Ascending aorta (tissue), 2 donors: ENCODE measurements at regions of chr9 and their contacts with region 1.

Region 1: GRCh38 chr9:70258692-70259511 is at the start of gene SMC5:
- DNase-seq: peak; percentile 47 to 96
- H3K4me3 ChIP-seq: peak within 1 kb of the TSS; percentile 75 to 98
- H3K27ac ChIP-seq: peak within 1 kb of the TSS; percentile 84 to 96
- H3K4me1 ChIP-seq: peaks cover 6 to 43% of the 10 kb centered on the region in 2 donors
- H3K27me3 ChIP-seq: no peaks in the 10 kb centered on the region
- CTCF ChIP-seq: no peak
- total RNA-seq, gene SMC5: 13.9 TPM

Region 2: DNA sequence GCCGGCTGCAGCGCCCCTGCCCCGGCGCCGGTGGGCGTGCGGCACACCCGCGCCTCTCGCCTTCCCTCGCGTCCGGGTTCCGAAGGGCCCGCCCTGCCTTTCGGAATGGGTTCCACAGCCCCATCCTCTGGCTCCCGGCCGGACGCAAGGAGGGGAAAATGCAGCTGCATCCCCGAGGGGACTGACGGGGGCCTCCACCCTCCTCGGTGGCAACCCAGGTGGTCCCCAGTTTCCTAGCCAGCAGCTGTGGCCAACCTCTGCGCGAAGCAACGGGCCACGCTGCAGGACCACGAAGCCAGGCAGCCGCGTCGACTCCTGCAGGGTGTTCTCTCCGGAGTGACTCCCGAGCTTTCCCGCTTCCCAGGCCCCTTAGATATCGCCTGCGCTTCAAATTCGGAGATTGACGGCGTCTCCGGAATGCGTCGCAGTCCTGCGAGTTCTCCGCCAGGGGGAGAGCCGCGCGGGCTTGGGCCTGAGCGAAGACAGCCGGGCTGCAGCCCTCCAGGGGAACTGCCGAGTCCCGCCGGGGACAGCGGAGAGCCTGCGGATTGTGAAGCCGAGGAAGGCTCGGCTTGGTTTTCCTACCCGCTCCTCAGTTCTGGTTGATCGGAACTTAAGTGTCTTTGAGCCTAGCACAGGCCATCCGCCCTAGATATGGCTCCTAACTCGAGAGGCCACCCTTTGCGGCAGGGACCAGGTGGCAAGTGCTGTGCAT is 586.1 kb before region 1 on chr9:
- intact Hi-C with region 1: loop called (anchors 2 kb)
- DNase-seq: peak; percentile 11 to 89
- H3K4me3 ChIP-seq: peak overlapping the region; percentile 76 to 95
- H3K27ac ChIP-seq: peak overlapping the region; percentile 9 to 82
- H3K4me1 ChIP-seq: peaks cover 0 to 11% of the 10 kb centered on the region in 2 donors
- H3K27me3 ChIP-seq: no peaks in the 10 kb centered on the region
- CTCF ChIP-seq: peak; percentile 66 to 88 (median 88)

Region 3: GRCh38 chr9:69759421-69760277 is 499.3 kb before region 1 on chr9 and contains the start of gene PTAR1:
- intact Hi-C with region 1: loop called (anchors 1 kb)
- DNase-seq: peak; percentile 50 to 94
- H3K4me3 ChIP-seq: peak within 1 kb of the TSS; percentile 92 to 97
- H3K27ac ChIP-seq: peak within 1 kb of the TSS; percentile 97 to 98
- H3K4me1 ChIP-seq: peaks cover 2 to 10% of the 10 kb centered on the region in 2 donors
- H3K27me3 ChIP-seq: no peaks in the 10 kb centered on the region
- CTCF ChIP-seq: no peak
- total RNA-seq, gene PTAR1: 13.3 TPM

Region 4: GRCh38 chr9:70120834-70121510 is 137.9 kb before region 1 on chr9:
- intact Hi-C with region 1: no loop called
- DNase-seq: peak in 1 of 2 donors; percentile 80
- H3K4me3 ChIP-seq: no peak overlapping the region
- H3K27ac ChIP-seq: peak overlapping the region; percentile 17 to 56
- H3K4me1 ChIP-seq: no peaks in the 10 kb centered on the region
- H3K27me3 ChIP-seq: no peaks in the 10 kb centered on the region
- CTCF ChIP-seq: no peak

Region 5: GRCh38 chr9:70413798-70414775 is 155.2 kb after region 1 on chr9 and contains the start of gene KLF9:
- intact Hi-C with region 1: loop called (anchors 5 kb)
- DNase-seq: peak; percentile 95 to 98
- H3K4me3 ChIP-seq: peak within 1 kb of the TSS; percentile 92 to 94
- H3K27ac ChIP-seq: peak within 1 kb of the TSS; percentile 100
- H3K4me1 ChIP-seq: peaks cover 5 to 37% of the 10 kb centered on the region in 2 donors
- H3K27me3 ChIP-seq: no peaks in the 10 kb centered on the region
- CTCF ChIP-seq: no peak
- total RNA-seq, gene KLF9: 98.7 TPM

Region 6: DNA sequence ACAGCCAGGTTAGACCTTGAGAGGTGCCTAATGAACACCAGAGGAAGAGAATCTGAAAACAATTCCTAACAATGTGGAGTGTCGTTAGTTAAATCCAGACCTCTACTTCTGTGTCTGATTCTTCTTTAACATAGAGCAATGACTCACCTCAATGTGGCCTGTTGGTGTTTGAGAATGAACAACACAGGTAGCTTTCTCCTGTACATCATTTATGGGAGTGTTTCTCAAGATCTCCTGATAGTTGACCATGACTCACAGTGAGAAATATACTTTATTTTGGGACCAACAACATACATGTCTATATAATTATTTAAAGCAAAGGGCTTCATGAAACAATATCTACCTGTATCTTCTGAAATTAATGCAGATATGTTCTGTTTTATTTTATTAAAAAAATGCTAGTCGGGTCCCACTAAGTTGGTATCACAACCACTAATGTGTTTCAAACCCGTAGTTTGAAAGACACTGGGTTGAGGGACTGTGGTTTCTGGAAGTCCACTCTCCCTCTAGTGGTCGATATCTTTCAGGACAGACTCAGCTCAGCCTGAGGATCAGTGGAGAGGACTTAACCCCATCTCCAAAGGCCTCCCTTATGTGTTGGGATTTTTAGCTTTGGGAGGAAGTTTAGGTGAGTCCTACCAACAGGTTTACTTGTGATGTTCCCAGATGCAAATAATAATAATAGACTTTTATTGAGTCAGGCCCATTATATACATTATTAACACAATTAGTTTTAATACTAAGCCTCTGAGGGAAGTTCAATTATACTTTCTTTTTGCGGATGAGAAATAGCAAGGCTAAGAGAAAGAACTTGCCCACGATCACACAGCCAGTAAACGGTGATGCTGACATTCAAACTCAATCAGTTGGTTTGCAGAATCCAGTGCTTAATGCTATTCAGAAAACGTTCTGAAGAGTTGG is 225.6 kb after region 1 on chr9:
- intact Hi-C with region 1: loop called (anchors 5 kb)
- DNase-seq: no peak
- H3K4me3 ChIP-seq: no peak overlapping the region
- H3K27ac ChIP-seq: peak overlapping the region; percentile 40 to 62
- H3K4me1 ChIP-seq: peaks cover 22 to 41% of the 10 kb centered on the region in 2 donors
- H3K27me3 ChIP-seq: no peaks in the 10 kb centered on the region
- CTCF ChIP-seq: peak; percentile 67 to 73 (median 69)

Region 7: GRCh38 chr9:70924895-70925547 is 666.1 kb after region 1 on chr9:
- intact Hi-C with region 1: loop called (anchors 5 kb)
- DNase-seq: peak in 1 of 2 donors; percentile 82
- H3K4me3 ChIP-seq: peak overlapping the region; percentile 41 to 57
- H3K27ac ChIP-seq: peak overlapping the region; percentile 56 to 70
- H3K4me1 ChIP-seq: peaks cover 3 to 4% of the 10 kb centered on the region in 2 donors
- H3K27me3 ChIP-seq: no peaks in the 10 kb centered on the region
- CTCF ChIP-seq: peak; percentile 68 to 77 (median 76)

Region 8: DNA sequence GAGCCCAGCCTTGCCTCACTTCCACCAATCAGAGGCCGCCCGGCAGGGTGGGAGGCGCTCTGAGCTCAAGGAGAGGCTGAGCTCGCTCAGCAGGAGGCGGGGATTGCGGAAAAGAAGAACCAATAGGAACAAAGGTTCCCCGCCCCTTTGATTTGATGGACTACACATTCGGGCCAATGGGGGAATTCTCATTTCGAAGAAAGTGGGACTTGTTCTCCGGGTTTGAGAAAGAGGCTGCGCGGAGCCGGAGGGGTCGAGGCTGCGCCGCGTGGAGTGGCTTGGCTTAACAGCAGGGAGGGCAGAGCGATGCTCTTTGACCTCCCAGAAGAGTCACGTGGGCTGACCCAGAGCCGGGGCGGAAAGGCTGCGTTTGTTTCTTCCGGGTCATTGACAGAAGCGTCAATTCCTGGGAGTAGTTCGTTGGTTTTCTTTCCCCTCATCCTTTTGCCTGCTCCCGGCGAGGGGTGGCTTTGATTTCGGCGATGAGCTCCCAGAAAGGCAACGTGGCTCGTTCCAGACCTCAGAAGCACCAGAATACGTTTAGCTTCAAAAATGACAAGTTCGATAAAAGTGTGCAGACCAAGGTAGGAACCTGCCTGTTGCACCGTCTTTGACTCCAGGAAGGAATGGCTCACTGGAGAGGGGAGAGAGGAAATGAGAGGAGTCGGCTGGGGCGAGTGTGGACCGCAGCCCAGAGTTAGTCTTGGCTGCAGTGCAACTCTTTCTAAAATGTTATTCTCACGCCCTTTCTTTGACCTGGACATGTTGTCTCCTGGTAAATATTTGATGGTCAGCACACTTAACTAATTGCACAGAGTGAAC is 1652.6 kb after region 1 on chr9 and contains the start of gene C9orf85:
- intact Hi-C with region 1: loop called (anchors 10 kb)
- DNase-seq: peak; percentile 97 to 99
- H3K4me3 ChIP-seq: peak within 1 kb of the TSS; percentile 70 to 96
- H3K27ac ChIP-seq: peak within 1 kb of the TSS; percentile 92 to 96
- H3K4me1 ChIP-seq: peaks cover 2 to 13% of the 10 kb centered on the region in 2 donors
- H3K27me3 ChIP-seq: no peaks in the 10 kb centered on the region
- CTCF ChIP-seq: no peak
- total RNA-seq, gene C9orf85: 2.6 TPM